Caco-2 (cell line): ENCODE measurements at regions of chr5 and their contacts with region 1.

Region 1: DNA sequence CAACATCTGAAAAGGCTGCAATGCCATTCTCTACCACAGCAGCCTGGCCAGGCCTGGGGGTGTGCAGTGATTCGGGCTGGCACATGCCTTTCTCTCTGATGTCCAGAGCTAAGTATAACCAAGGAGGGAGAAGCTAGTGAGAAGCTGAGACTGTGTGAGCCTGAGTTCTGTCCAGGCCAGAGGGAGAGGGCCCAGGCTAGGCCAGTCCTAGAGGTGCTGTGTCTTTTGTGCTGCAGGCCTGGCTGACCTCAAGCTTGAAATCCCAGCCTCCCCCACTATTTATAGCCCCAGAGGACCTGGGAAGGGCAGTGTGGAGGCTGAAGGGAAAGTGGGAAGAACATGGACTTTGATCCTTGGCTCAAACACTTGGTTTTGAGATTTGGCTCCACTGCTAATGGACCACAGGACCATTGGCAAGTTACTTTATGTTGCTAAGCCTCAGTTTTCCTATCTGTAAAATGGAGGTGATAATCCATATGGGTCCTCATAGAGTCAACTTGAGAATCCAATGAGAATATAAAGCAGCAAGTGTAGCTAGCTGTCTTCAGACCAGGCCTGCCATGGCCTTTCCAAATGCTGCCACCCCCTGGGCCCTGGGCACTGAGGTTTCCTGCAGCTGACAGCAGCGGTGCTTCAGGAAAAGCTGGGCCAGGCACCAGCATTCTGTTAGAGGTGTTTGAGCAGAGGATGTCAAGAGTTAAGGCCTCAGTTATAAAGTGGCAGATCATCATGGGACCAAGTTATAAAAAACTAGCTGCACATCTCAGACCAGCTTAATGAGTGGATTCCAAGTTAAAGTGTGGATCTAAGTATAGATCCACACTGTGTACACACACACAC is 21.1 kb downstream of the BNIP1 start:
- DNase-seq: no peak
- H3K4me3 ChIP-seq: no peak overlapping the region
- H3K4me3 Mint-ChIP-seq: no peak overlapping the region
- H3K27ac Mint-ChIP-seq: no peak overlapping the region
- H3K4me1 ChIP-seq: no peaks in the 10 kb centered on the region
- H3K4me1 Mint-ChIP-seq: no peaks in the 10 kb centered on the region
- H3K27me3 ChIP-seq: no peaks in the 10 kb centered on the region
- H3K27me3 Mint-ChIP-seq: no peaks in the 10 kb centered on the region
- CTCF ChIP-seq: no peak

Region 2: GRCh38 chr5:173123416-173123815 is 42.0 kb before region 1 on chr5:
- CTCF ChIA-PET with region 1: no interaction called
- POLR2A ChIA-PET with region 1: no interaction called
- intact Hi-C with region 1: no loop called
- DNase-seq: peak in 1 of 2 experiments; percentile 25
- H3K4me3 ChIP-seq: no peak overlapping the region
- H3K4me3 Mint-ChIP-seq: no peak overlapping the region
- H3K27ac Mint-ChIP-seq: no peak overlapping the region
- H3K4me1 ChIP-seq: no peaks in the 10 kb centered on the region
- H3K4me1 Mint-ChIP-seq: no peaks in the 10 kb centered on the region
- H3K27me3 ChIP-seq: no peaks in the 10 kb centered on the region
- H3K27me3 Mint-ChIP-seq: no peaks in the 10 kb centered on the region
- CTCF ChIP-seq: no peak

Region 3: GRCh38 chr5:173204185-173204979 is 39.0 kb after region 1 on chr5:
- CTCF ChIA-PET with region 1: no interaction called
- POLR2A ChIA-PET with region 1: no interaction called
- intact Hi-C with region 1: loop called (anchors 5 kb)
- DNase-seq: peak in 1 of 2 experiments; percentile 35
- H3K4me3 ChIP-seq: no peak overlapping the region
- H3K4me3 Mint-ChIP-seq: no peak overlapping the region
- H3K27ac Mint-ChIP-seq: no peak overlapping the region
- H3K4me1 ChIP-seq: no peaks in the 10 kb centered on the region
- H3K4me1 Mint-ChIP-seq: no peaks in the 10 kb centered on the region
- H3K27me3 ChIP-seq: no peaks in the 10 kb centered on the region
- H3K27me3 Mint-ChIP-seq: peaks cover 21% of the 10 kb centered on the region
- CTCF ChIP-seq: peak; percentile 22 to 60

Region 4: GRCh38 chr5:173283318-173284288 is 118.2 kb after region 1 on chr5:
- CTCF ChIA-PET with region 1: no interaction called
- POLR2A ChIA-PET with region 1: no interaction called
- intact Hi-C with region 1: loop called (anchors 1 kb)
- DNase-seq: peak; percentile 91 to 94
- H3K4me3 ChIP-seq: peak overlapping the region; percentile 46
- H3K4me3 Mint-ChIP-seq: peak overlapping the region; percentile 73
- H3K27ac Mint-ChIP-seq: no peak overlapping the region
- H3K4me1 ChIP-seq: peaks cover 8% of the 10 kb centered on the region; the same call in 1 of the 2 replicates
- H3K4me1 Mint-ChIP-seq: peaks cover 8% of the 10 kb centered on the region
- H3K27me3 ChIP-seq: no peaks in the 10 kb centered on the region
- H3K27me3 Mint-ChIP-seq: peaks cover 15% of the 10 kb centered on the region
- CTCF ChIP-seq: peak; percentile 91 to 92